ENCODE measurements at regions of chr22 and their contacts with region 1.

Region 1: GRCh38 chr22:18060646-18061620 is 16.9 kb upstream of the PEX26 start:
- DNase-seq: no peak
- ATAC-seq: no peak
- H3K4me3 ChIP-seq: no peak overlapping the region
- H3K4me3 Mint-ChIP-seq: no peak overlapping the region
- H3K27ac ChIP-seq: no peak overlapping the region
- H3K27ac Mint-ChIP-seq: no peak overlapping the region
- H3K4me1 ChIP-seq: peaks cover 5% of the 10 kb centered on the region
- H3K4me1 Mint-ChIP-seq: peaks cover 0 to 4% of the 10 kb centered on the region in 2 donors
- H3K27me3 ChIP-seq: no peaks in the 10 kb centered on the region
- H3K27me3 Mint-ChIP-seq: peaks cover 18 to 23% of the 10 kb centered on the region in 2 donors
- CTCF ChIP-seq: no peak

Region 2: DNA sequence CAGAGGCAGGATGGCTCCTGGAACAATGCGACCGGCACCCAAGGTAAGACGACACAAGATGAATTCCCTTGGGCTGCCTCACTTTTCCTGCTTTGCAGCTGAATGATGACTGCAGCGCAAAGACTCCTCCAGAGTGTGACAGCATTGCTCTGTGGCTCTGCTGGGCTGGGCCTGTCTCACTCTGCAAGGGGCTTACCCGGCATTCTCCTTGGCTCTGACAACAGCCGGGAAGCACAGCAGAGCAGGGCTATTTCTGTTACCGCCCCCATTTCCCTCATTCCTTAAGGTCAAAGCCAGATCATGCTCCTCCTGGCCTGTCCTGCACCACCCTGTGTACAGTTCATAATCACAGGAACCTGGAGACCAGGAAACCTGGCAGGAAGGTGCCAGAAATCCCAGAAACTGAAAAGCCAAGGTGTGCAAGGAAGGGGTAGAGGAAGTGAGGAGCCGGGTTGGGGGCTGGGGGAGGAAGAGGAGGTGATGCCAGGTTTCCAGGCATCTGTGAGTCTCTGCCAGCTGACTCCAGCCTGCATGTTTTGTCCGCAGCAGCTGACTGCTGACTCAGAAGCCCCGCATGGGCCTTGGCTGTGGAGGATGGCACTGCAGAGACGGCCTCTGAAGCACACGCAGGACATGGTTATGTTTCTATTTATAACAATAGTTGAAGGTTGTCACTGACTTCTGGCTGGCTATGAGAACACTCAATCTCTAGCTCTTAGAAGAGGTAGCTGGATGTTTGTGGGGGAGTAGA is 150.2 kb before region 1 on chr22:
- intact Hi-C with region 1: loop called (anchors 10 kb)
- DNase-seq: no peak
- ATAC-seq: no peak
- H3K4me3 ChIP-seq: no peak overlapping the region
- H3K4me3 Mint-ChIP-seq: no peak overlapping the region
- H3K27ac ChIP-seq: no peak overlapping the region
- H3K27ac Mint-ChIP-seq: no peak overlapping the region
- H3K4me1 ChIP-seq: no peaks in the 10 kb centered on the region
- H3K4me1 Mint-ChIP-seq: peaks cover 0 to 14% of the 10 kb centered on the region in 2 donors
- H3K27me3 ChIP-seq: no peaks in the 10 kb centered on the region
- H3K27me3 Mint-ChIP-seq: no peaks in the 10 kb centered on the region
- CTCF ChIP-seq: no peak